RWPE1 (cell line): ENCODE measurements at regions of chr9 and their contacts with region 1.

Region 1: GRCh38 chr9:131739980-131740648 is at the start of gene RAPGEF1:
- DNase-seq: peak; percentile 84
- H3K27ac ChIP-seq: peak within 1 kb of the TSS; percentile 79
- CTCF ChIP-seq: peak; percentile 99

Region 2: DNA sequence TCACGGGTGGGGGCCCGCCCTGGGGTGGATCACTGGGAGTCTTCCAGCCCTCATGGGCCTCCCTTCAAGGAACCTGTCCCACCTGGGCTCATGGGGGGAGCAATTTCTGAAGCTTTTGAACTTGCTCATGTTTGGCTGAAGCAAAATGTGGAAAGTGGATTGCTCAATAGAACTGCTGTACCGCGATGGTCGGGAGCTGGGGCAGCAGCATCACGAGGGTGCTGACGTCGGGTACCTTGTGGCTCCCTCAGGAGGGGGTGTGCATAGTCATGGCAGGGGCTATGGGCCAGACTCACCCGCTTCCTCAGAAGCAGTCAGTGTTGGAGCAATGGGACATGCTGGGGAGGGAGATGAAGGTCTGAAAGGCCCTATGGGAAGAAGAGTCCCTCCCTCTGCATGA is 136.9 kb before region 1 on chr9:
- CTCF ChIA-PET with region 1: interaction called, 14 read pairs
- POLR2A ChIA-PET with region 1: no interaction called
- DNase-seq: no peak
- H3K27ac ChIP-seq: peak overlapping the region; percentile 4; the same call in 1 of the 2 replicates
- CTCF ChIP-seq: no peak

Region 3: DNA sequence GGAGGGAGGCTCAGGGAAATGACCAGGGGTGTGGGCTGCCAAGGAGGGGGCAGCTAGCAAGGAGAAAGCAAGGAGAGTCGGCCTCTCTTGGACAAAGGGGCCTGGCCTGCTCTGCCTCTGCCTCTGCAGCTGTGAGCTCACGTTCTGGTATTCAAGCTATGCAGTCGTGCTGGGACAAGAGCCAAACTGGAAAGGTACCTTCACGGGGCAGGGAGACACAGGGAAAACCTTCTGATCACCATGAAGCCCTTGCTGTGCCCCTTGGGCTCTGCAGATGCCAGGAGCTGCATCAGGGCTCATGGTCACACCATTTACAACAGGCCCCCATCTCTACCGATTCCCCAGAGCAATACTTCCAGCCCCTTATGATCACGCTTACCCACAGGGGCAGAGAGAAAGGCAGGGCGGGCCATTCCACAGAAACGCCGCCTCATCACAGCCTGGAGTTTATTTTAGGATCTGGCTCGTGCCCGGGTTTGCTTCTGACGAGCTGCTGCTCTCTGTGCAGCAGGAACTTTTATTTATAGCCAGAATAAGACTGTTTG is 131.5 kb before region 1 on chr9:
- CTCF ChIA-PET with region 1: interaction called, 14 read pairs
- POLR2A ChIA-PET with region 1: no interaction called
- DNase-seq: peak; percentile 98
- H3K27ac ChIP-seq: peak overlapping the region; percentile 95
- CTCF ChIP-seq: no peak